Testis (tissue), 5 donors: ENCODE measurements at regions of chr7 and their contacts with region 1.

Region 1: DNA sequence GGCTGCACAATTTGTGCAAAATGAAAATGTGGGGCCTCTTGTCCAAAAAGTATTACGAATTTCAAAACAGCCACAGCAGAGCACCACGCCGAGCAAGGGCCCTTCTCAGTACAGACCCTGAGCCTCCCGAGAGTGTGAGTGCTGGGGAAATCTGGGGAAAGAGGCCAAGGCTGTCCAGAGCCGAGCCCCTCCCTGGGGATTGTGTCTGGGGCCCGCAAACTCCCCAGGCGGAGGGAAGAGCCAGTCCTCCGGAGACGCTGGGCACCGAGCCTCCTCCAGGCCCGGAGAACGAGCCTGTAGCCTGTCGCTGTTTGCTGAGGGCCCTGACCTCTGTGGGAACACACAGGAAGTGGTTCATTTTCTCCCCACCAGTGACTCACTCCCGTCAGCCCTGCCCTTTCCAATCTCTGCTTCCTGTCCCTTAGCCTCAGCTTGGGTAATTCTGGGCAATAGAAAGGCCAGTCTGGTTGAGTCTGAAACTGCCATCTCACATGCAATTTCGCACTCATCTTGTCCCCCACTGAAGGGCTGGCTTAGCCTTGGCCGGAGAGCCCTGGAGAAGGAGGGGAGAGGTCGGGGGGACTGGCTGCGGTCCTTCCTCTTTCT is 19.5 kb upstream of the GNA12 start:
- DNase-seq: peak; percentile 80
- H3K4me3 ChIP-seq: no peak overlapping the region
- H3K27ac ChIP-seq: peak overlapping the region; percentile 89 to 94
- H3K4me1 ChIP-seq: peaks cover 23% of the 10 kb centered on the region
- H3K27me3 ChIP-seq: no peaks in the 10 kb centered on the region
- CTCF ChIP-seq: no peak
- POLR2A ChIP-seq: no peak

Region 2: DNA sequence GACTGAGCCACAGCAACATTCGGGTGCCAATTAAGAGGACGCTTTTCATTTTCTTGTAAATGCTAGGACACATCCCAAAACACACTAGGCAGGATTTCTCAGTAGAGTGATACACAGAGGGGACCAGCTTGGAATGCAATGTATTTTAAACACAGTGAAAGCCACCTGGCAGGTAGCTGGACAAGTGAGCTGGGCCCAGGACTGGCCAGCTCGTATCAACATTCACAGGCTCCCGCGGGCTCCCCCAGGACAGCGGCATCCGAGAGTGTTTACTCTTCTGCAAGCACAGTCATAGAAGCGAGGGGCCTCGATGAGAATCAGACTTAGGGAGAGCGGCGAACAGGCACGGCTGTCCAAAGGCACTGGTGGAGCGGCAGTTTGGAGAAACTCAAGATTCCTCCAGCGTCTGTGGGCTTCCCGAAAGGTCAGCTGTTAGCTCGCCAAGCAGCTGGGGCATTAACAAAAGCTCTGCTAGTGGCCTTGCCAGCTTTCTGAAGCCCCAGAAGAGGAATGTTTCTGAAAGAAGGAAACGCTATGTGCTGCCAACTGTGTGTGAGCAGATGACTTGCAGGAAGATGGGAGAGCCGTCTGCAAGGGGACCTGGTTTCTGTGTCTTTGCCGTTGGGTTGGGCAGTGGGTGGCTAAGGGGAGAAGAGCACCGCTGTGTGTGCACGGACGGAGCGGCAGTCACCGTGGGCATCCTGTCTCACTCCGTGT is 133.7 kb before region 1 on chr7:
- intact Hi-C with region 1: no loop called
- DNase-seq: peak; percentile 66
- H3K4me3 ChIP-seq: no peak overlapping the region
- H3K27ac ChIP-seq: peak overlapping the region in 1 of 2 donors; percentile 67
- H3K4me1 ChIP-seq: peaks cover 29% of the 10 kb centered on the region
- H3K27me3 ChIP-seq: no peaks in the 10 kb centered on the region
- CTCF ChIP-seq: no peak
- POLR2A ChIP-seq: no peak

Region 3: DNA sequence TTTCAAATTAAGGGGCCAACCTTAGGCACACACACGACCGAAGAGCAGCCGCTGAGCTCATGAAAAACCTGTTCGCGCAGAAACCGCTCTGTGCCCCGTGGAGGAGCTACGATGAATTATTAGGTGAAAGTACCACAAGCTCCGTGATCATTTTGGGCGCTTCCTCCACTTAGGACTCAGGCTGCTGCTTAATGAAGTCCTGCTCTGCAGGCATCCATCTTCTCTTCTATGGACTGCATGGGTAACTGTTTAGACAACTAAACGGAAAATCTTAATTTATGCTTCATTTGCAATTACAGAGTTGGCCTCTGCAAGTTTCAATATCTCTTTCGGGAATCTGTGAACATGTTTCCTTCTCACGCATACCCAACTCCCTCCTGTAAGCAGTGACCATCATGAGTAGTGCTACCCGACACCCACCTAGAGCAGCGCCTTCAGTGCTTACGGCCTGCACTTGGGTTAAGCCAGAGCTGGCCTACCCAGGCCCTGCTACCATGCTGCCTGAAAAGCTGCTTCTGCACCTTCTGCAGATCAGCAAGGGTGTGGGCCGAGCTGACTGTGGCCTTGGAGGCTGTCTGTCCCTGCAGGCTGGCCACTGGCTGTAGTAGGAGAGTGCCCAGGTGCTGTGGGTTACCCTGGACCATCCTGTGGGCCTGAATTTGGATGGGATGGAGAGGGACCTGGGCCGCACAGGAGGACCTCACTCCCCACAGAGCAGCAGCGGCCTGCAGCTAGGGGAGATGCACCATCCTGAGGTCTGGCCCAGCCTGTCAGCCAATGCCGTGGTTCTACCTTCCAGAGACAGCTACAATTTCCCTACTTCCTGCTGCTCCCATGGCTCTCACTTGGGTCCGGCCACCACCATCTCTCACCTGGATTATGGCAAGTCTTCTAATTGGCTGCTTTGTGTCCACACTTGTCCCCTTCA is 55.5 kb before region 1 on chr7:
- intact Hi-C with region 1: loop called (anchors 5 kb)
- DNase-seq: no peak
- H3K4me3 ChIP-seq: no peak overlapping the region
- H3K27ac ChIP-seq: no peak overlapping the region
- H3K4me1 ChIP-seq: peaks cover 43% of the 10 kb centered on the region
- H3K27me3 ChIP-seq: no peaks in the 10 kb centered on the region
- CTCF ChIP-seq: no peak
- POLR2A ChIP-seq: no peak

Region 4: GRCh38 chr7:2821161-2821841 is 42.3 kb before region 1 on chr7:
- intact Hi-C with region 1: no loop called
- DNase-seq: no peak
- H3K4me3 ChIP-seq: no peak overlapping the region
- H3K27ac ChIP-seq: peak overlapping the region; percentile 13 to 74
- H3K4me1 ChIP-seq: peaks cover 81% of the 10 kb centered on the region
- H3K27me3 ChIP-seq: no peaks in the 10 kb centered on the region
- CTCF ChIP-seq: no peak
- POLR2A ChIP-seq: no peak

Region 5: GRCh38 chr7:2921653-2922347 is 58.2 kb after region 1 on chr7:
- intact Hi-C with region 1: no loop called
- DNase-seq: peak; percentile 35
- H3K4me3 ChIP-seq: no peak overlapping the region
- H3K27ac ChIP-seq: no peak overlapping the region
- H3K4me1 ChIP-seq: peaks cover 11% of the 10 kb centered on the region
- H3K27me3 ChIP-seq: no peaks in the 10 kb centered on the region
- CTCF ChIP-seq: peak in 2 of 3 experiments; percentile 24 to 57
- POLR2A ChIP-seq: no peak

Region 6: DNA sequence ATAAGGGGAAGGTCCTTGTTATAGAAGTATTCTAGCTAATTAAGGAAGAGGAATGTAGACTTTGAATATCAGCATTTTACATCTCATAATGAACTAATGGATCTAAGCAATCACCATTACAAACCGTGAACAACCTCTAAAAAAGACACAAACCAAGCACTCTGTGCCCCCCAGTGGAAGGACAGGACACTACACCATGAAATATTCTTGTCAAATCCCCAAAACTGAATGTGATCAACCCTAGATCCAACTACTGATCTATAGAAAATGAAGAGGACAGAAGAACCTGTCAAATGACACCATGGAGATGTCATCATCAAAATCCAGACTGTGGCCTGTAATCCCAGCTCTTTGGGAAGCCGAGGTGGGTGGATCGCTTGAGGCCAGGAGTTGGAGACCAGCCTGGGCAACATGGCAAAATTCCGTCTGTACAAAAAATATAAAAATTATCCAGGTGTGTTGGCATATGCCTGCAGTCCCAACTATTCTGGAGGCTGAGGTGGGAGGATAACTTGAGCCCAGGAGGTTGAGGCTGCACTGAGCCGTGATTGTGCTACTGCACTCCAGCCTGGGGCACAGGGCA is 291.4 kb after region 1 on chr7:
- intact Hi-C with region 1: no loop called
- DNase-seq: peak; percentile 53
- H3K4me3 ChIP-seq: no peak overlapping the region
- H3K27ac ChIP-seq: no peak overlapping the region
- H3K4me1 ChIP-seq: no peaks in the 10 kb centered on the region
- H3K27me3 ChIP-seq: no peaks in the 10 kb centered on the region
- CTCF ChIP-seq: peak; percentile 39 to 67 (median 65)
- POLR2A ChIP-seq: no peak